ENCODE measurements at regions of chr18 and their contacts with region 1.

Region 1: DNA sequence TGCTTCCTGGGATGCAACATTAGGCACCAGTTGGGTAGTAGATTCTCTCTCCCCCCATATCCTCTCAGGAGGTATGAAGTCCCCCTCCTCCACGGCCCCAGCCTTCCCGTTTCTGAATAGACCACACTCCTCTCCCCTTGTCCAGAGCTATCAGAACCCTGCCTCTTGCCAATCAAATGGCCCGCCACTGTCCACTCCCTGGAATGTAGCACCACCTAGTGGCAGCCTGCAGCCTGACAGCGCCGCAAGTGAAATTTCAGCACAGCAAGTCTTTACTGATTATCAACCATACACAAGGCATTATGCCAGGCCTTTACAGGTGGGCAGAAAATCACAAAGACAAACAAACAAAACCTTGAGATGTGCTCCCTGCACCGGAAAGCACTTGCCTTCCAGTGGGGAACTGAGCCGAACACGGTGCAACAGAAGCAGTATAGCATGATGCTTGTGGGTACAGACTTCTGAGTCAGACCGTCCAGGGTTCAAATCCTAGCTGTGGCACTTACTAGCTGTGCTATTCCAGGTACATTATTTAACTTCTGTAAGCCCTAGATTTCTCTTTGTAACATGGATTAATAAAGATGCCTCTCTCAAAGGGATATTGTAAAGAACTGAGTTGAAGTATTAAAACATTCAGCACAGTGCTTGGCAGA is 174.0 kb downstream of the SMAD2 start:
- DNase-seq: peak; percentile 64
- H3K4me3 ChIP-seq: no peak overlapping the region
- H3K27ac ChIP-seq: no peak overlapping the region
- H3K4me1 ChIP-seq: no peaks in the 10 kb centered on the region
- H3K27me3 ChIP-seq: no peaks in the 10 kb centered on the region
- CTCF ChIP-seq: peak; percentile 98

Region 2: GRCh38 chr18:47050468-47050867 is 706.0 kb before region 1 on chr18:
- CTCF ChIA-PET with region 1: no interaction called
- POLR2A ChIA-PET with region 1: no interaction called
- intact Hi-C with region 1: loop called (anchors 2 kb)
- DNase-seq: peak; percentile 59
- H3K4me3 ChIP-seq: no peak overlapping the region
- H3K27ac ChIP-seq: no peak overlapping the region
- H3K4me1 ChIP-seq: no peaks in the 10 kb centered on the region
- H3K27me3 ChIP-seq: no peaks in the 10 kb centered on the region
- CTCF ChIP-seq: peak; percentile 82

Region 3: DNA sequence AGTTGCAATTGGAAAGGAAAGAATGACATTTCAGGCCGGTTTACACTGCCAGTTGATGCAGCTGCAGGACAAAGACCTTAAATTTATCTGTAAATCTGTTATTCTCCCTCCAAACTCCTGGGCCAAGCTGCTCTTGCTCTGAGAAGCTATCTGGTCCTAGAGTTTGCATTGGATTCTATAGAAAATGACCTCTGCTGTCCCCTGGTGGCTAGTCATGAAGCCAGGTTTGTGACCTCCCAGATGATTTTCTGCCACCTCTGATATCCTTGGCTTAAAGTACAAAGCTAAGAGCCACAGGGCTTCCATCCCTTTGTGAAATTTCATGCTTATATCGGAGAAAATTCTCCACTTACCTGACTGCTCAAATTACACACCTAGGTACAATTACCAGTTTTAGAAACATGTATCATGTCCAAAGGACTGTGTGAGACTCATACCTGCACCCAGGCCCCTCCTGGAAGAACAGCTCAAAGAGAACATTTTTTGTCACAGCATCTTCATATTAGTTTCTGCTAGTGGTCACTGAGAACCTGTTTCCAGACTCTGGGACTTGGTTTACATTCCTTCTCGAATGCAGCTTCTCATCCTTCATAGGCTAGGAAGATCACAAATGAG is 551.5 kb before region 1 on chr18:
- CTCF ChIA-PET with region 1: no interaction called
- POLR2A ChIA-PET with region 1: no interaction called
- intact Hi-C with region 1: no loop called
- DNase-seq: peak; percentile 35
- H3K4me3 ChIP-seq: no peak overlapping the region
- H3K27ac ChIP-seq: no peak overlapping the region
- H3K4me1 ChIP-seq: no peaks in the 10 kb centered on the region
- H3K27me3 ChIP-seq: peaks cover 61% of the 10 kb centered on the region
- CTCF ChIP-seq: peak; percentile 64

Region 4: DNA sequence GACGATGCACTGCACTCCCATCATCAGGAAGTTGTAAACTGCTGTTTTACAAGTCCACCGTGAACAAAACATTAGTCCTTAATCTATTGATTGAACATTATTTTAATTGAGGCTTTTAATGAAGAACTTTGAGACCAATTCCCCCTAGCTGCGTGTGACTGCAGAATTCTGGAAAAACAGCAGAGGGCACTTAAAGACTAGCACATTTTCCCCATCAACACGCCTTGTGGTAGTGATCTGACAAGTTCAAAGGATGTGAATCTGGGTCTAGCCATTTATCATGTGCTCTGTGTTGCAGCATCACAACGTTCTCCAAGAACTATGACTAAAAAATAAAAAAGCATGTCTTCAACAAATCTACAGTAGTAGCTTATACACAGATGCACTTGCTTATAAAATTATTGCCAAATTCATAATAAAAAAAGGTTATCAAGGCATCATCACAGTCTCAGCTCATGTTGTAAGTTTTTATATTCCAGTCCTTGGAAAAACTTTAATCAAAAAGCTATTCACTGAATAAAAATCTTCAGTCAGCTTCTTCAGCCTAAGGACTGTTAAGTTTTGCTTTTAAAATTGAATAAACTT is 540.8 kb before region 1 on chr18:
- CTCF ChIA-PET with region 1: interaction called, 9 read pairs
- POLR2A ChIA-PET with region 1: no interaction called
- intact Hi-C with region 1: loop called (anchors 1 kb)
- DNase-seq: peak; percentile 53
- H3K4me3 ChIP-seq: no peak overlapping the region
- H3K27ac ChIP-seq: no peak overlapping the region
- H3K4me1 ChIP-seq: no peaks in the 10 kb centered on the region
- H3K27me3 ChIP-seq: peaks cover 97% of the 10 kb centered on the region
- CTCF ChIP-seq: peak; percentile 76

Region 5: GRCh38 chr18:47283476-47283875 is 473.0 kb before region 1 on chr18:
- CTCF ChIA-PET with region 1: no interaction called
- POLR2A ChIA-PET with region 1: no interaction called
- intact Hi-C with region 1: loop called (anchors 10 kb)
- DNase-seq: peak; percentile 67
- H3K4me3 ChIP-seq: no peak overlapping the region
- H3K27ac ChIP-seq: no peak overlapping the region
- H3K4me1 ChIP-seq: no peaks in the 10 kb centered on the region
- H3K27me3 ChIP-seq: peaks cover 33% of the 10 kb centered on the region
- CTCF ChIP-seq: peak; percentile 70

Region 6: GRCh38 chr18:47701133-47701532 is 55.4 kb before region 1 on chr18:
- CTCF ChIA-PET with region 1: no interaction called
- POLR2A ChIA-PET with region 1: no interaction called
- intact Hi-C with region 1: no loop called
- DNase-seq: no peak
- H3K4me3 ChIP-seq: no peak overlapping the region
- H3K27ac ChIP-seq: no peak overlapping the region
- H3K4me1 ChIP-seq: no peaks in the 10 kb centered on the region
- H3K27me3 ChIP-seq: peaks cover 36% of the 10 kb centered on the region
- CTCF ChIP-seq: no peak

Region 7: DNA sequence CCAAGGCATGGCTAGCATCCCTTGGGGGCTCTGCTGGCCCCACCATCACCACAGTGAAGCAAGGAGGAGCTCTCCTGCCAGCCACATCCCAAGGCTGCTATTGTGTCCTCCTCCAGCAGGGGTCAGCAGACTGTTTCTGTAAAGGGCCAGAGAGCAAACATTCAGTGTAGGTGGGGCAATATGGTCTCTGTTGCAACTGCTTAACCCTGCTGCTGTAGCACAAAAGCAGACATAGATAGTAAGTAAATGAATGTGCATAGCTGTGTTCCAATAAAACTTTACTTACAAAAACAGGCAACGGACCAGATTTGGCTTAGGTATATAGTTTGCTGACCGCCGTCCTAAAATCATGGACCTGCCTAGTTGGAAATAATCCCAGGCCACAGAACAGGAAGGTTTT is 689.0 kb after region 1 on chr18:
- CTCF ChIA-PET with region 1: no interaction called
- POLR2A ChIA-PET with region 1: no interaction called
- intact Hi-C with region 1: no loop called
- DNase-seq: peak; percentile 86
- H3K4me3 ChIP-seq: no peak overlapping the region
- H3K27ac ChIP-seq: no peak overlapping the region
- H3K4me1 ChIP-seq: no peaks in the 10 kb centered on the region
- H3K27me3 ChIP-seq: peaks cover 21% of the 10 kb centered on the region
- CTCF ChIP-seq: peak; percentile 88

Measured in A673 (cell line).